AG04450 (cell line): ENCODE measurements at regions of chr15 and their contacts with region 1.

Region 1: GRCh38 chr15:37880009-37880834 is 54.2 kb upstream of the TMCO5A start:
- DNase-seq: peak; percentile 41
- H3K4me3 ChIP-seq: no peak overlapping the region
- H3K27ac ChIP-seq: no peak overlapping the region
- H3K27me3 ChIP-seq: no peaks in the 10 kb centered on the region
- CTCF ChIP-seq: peak; percentile 87

Region 2: GRCh38 chr15:36883713-36884517 is 996.3 kb before region 1 on chr15:
- CTCF ChIA-PET with region 1: interaction called, 11 read pairs
- POLR2A ChIA-PET with region 1: no interaction called
- DNase-seq: peak; percentile 66
- H3K4me3 ChIP-seq: peak overlapping the region; percentile 50
- H3K27ac ChIP-seq: no peak overlapping the region
- H3K27me3 ChIP-seq: peaks cover 78% of the 10 kb centered on the region
- CTCF ChIP-seq: peak; percentile 87

Region 3: GRCh38 chr15:37682304-37682703 is 197.9 kb before region 1 on chr15:
- CTCF ChIA-PET with region 1: interaction called, 23 read pairs
- POLR2A ChIA-PET with region 1: no interaction called
- DNase-seq: no peak
- H3K4me3 ChIP-seq: no peak overlapping the region
- H3K27ac ChIP-seq: no peak overlapping the region
- H3K27me3 ChIP-seq: no peaks in the 10 kb centered on the region
- CTCF ChIP-seq: peak; percentile 38; the same call in 1 of the 2 replicates

Region 4: DNA sequence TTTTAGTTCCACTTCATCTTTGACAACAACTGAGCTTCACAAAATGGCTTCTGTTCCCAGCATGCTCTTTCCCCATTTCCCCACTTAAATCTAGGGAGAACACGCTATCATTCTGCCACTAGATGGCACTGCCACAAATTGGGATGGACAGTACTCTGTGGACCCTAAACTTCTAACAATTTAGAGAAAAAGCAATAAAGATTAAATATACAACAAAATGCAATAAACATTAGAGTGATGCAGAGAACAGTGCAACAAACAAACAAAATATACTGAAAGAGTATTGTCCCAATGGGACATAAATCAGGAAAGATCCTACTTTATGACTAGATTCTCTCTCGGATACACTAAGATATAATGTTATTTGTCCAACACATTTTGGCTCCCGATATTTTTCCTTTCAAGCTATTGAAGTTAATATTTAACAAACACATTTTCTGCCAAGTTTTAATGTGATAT is 115.5 kb before region 1 on chr15:
- CTCF ChIA-PET with region 1: interaction called, 95 read pairs
- POLR2A ChIA-PET with region 1: no interaction called
- DNase-seq: peak; percentile 15
- H3K4me3 ChIP-seq: no peak overlapping the region
- H3K27ac ChIP-seq: no peak overlapping the region
- H3K27me3 ChIP-seq: no peaks in the 10 kb centered on the region
- CTCF ChIP-seq: peak; percentile 72

Region 5: GRCh38 chr15:37837276-37837675 is 42.9 kb before region 1 on chr15:
- CTCF ChIA-PET with region 1: no interaction called
- POLR2A ChIA-PET with region 1: no interaction called
- DNase-seq: no peak
- H3K4me3 ChIP-seq: no peak overlapping the region
- H3K27ac ChIP-seq: no peak overlapping the region
- H3K27me3 ChIP-seq: no peaks in the 10 kb centered on the region
- CTCF ChIP-seq: no peak

Region 6: DNA sequence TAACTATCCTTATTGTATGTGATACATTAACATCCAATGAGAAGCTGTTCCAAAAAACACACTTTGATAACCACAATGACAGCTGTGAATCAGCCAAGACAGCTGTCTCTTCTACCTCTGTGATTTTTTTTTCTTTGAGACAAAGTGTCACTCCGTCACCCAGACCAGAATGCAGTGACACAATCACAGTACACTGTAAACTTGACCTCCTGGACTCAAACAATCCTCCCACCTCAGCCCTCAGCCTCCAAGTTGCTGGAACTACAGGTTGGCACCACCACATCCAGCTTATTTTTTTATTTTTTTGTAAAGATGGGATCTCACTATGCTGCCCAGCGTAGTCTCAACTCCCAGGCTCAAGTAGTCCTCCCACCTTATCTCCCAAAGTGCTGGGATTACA is 19.3 kb before region 1 on chr15:
- CTCF ChIA-PET with region 1: no interaction called
- POLR2A ChIA-PET with region 1: no interaction called
- DNase-seq: no peak
- H3K4me3 ChIP-seq: no peak overlapping the region
- H3K27ac ChIP-seq: no peak overlapping the region
- H3K27me3 ChIP-seq: no peaks in the 10 kb centered on the region
- CTCF ChIP-seq: no peak

Region 7: GRCh38 chr15:37907136-37907535 is 26.9 kb after region 1 on chr15:
- CTCF ChIA-PET with region 1: no interaction called
- POLR2A ChIA-PET with region 1: no interaction called
- DNase-seq: no peak
- H3K4me3 ChIP-seq: no peak overlapping the region
- H3K27ac ChIP-seq: no peak overlapping the region
- H3K27me3 ChIP-seq: peaks cover under 1% of the 10 kb centered on the region
- CTCF ChIP-seq: no peak